Left colon (tissue), 2 donors: ENCODE measurements at regions of chr14 and their contacts with region 1.

Region 1: GRCh38 chr14:35416108-35416750 is 11.7 kb upstream of the NFKBIA start:
- DNase-seq: no peak
- ATAC-seq: no peak

Region 2: GRCh38 chr14:35121887-35122695 is 294.1 kb before region 1 on chr14 and contains the starts of genes PPP2R3C and PRORP:
- intact Hi-C with region 1: loop called in 1 of 2 experiments (anchors 5 kb)
- DNase-seq: peak; percentile 91 to 97
- ATAC-seq: peak; percentile 85
- total RNA-seq, gene PPP2R3C: 23.9 to 27.8 TPM
- total RNA-seq, gene PRORP: 25.2 to 27.6 TPM

Region 3: GRCh38 chr14:35134328-35135123 is 281.7 kb before region 1 on chr14:
- intact Hi-C with region 1: loop called in 1 of 2 experiments (anchors 5 kb)
- DNase-seq: no peak
- ATAC-seq: no peak

Region 4: DNA sequence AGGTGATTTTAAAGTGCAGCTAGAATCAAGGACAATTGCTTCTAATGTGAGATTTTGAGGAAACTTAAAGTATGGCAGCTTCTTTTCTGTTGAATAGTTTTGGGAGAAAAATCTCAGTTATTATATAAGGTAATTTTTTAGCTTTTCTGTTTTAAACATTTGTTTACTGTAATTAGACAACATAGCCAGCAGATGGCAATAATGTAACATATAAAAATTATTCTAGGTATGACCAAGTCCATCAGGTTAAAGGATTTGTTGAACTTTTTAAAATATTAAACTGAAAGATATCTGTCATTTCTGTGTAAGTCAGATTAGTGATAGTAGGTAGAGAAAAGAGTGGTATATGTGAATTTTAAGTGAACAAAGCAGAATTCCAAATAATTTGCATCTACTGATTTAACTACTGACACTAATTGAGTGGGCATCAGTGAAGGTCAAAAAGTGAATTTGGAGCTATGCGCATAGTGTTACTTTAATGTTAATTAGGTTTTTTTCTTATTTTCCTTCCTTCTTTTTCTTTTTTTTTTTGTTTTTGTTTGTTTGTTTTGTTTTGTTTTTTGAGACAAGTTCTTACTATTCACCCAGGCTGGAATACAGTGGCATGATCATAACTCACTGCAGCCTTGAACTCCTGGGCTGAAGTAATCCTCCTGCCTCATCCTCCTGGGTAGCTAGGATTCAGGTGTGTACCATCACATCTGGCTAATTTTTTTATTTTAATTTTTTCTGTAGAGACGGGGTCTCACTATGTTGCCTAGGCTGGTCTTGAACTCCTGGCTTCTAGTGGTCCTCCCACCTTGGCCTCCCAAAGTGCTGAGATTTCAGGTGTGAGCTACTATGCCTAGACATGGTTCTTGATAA is 275.3 kb before region 1 on chr14:
- intact Hi-C with region 1: loop called (anchors 5 kb)
- DNase-seq: no peak
- ATAC-seq: peak; percentile 39

Region 5: DNA sequence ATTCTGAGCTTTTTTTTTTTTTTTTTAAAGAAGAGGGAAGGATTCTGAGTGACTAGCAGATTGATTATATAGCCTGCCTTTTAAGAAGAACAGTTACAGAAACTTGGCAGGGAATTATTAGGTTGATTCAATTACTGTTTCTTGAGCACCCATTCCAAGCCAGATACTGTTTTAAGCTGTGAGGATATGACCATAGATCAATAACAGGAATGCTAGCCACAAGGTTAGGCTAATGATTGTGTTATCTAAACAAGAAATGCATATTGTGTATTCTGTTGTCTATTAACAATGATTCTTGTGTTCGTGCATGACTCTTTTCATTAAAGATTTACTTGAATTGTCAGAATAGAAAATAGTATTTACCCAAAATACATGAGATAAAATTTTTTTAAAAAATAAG is 226.8 kb before region 1 on chr14:
- intact Hi-C with region 1: no loop called
- DNase-seq: no peak
- ATAC-seq: no peak

Region 6: GRCh38 chr14:35215110-35215876 is 200.9 kb before region 1 on chr14:
- intact Hi-C with region 1: loop called in 1 of 2 experiments (anchors 5 kb)
- DNase-seq: no peak
- ATAC-seq: peak; percentile 39

Region 7: GRCh38 chr14:35229084-35229483 is 187.1 kb before region 1 on chr14:
- intact Hi-C with region 1: no loop called
- DNase-seq: no peak
- ATAC-seq: no peak

Region 8: DNA sequence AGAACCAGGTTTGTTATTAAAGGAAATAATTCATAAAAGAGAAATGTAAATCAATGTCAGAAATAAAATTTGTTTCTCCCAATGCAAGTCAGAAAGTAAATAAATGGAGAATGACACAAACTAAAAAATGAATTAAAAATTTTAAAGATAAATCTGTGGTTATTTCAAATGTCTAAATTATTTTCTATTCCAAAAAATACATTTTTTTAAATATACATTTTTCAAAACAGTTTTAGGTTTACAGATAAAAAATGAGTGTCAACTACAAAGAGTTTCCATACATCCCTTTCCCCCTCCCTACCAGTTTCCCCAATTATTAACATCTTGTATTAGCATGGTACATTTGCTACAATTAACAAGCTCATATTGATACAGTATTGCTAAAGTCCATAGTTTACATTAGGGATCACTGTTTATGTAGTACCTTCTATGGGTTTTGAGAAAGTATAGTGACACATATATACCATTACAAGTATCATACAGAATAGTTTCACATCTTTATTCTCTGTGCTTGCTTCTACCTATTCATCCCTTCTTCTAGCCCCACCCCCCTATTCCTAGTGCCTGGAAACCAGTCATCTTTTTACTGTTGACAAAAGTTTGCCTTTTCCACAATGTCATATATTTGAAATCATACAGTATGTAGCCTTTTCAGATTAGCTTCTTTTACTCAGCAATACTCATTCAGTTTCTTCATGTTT is 288.7 kb after region 1 on chr14:
- intact Hi-C with region 1: no loop called
- DNase-seq: no peak
- ATAC-seq: no peak